ENCODE measurements at regions of chr7 and their contacts with region 1.

Region 1: DNA sequence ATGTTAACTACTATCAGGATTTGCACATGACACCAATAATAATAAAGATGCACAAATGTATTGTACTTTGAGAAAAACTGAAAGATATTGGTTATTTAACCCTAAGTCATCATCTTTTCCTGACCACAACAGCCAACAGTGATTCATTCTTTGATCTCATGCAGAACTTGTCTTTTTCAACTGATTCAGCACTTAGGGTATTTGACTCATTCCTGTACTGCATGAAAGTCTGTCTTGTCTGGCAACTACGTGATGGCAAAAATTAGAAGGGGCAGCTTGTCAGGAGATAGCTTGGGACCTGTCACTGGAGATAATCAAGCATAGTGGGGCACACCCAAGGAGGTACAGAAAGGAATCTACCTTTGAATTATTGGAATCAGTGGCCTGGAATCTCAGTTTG is 77.8 kb upstream of the LRRC17 start:
- DNase-seq: peak; percentile 49
- H3K4me3 Mint-ChIP-seq: no peak overlapping the region
- H3K27ac Mint-ChIP-seq: peak overlapping the region; percentile 52
- H3K4me1 Mint-ChIP-seq: peaks cover 7% of the 10 kb centered on the region
- H3K27me3 Mint-ChIP-seq: no peaks in the 10 kb centered on the region

Region 2: DNA sequence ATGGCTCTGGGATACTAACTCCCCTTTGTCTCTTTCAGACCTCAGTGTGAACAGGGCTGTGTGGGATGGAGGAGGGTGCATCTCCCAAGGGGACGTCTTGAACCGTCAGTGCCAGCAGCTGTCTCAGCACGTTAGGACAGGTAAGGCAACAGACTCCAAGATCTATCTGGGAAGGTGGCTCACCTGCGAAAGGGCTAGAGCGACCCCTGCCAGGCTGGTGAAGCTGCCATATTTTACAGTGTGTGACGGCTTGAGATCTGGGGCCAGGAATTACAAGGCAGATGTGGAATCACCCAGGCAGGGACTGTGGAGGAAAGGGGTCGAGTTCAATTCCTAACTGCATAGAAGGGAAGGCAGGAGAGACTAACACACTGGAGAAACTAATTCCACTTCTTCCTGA is 1803.9 kb before region 1 on chr7:
- CTCF ChIA-PET with region 1: no interaction called
- POLR2A ChIA-PET with region 1: no interaction called
- intact Hi-C with region 1: no loop called
- DNase-seq: no peak
- H3K4me3 Mint-ChIP-seq: no peak overlapping the region
- H3K27ac Mint-ChIP-seq: no peak overlapping the region
- H3K4me1 Mint-ChIP-seq: no peaks in the 10 kb centered on the region
- H3K27me3 Mint-ChIP-seq: peaks cover 8% of the 10 kb centered on the region

Region 3: GRCh38 chr7:102874166-102874829 is 39.3 kb after region 1 on chr7:
- CTCF ChIA-PET with region 1: no interaction called
- POLR2A ChIA-PET with region 1: no interaction called
- intact Hi-C with region 1: loop called (anchors 1 kb)
- DNase-seq: peak; percentile 51
- H3K4me3 Mint-ChIP-seq: no peak overlapping the region
- H3K27ac Mint-ChIP-seq: no peak overlapping the region
- H3K4me1 Mint-ChIP-seq: peaks cover 21% of the 10 kb centered on the region
- H3K27me3 Mint-ChIP-seq: no peaks in the 10 kb centered on the region

Region 4: GRCh38 chr7:102916426-102916825 is 81.4 kb after region 1 on chr7:
- CTCF ChIA-PET with region 1: no interaction called
- POLR2A ChIA-PET with region 1: no interaction called
- intact Hi-C with region 1: no loop called
- DNase-seq: no peak
- H3K4me3 Mint-ChIP-seq: no peak overlapping the region
- H3K27ac Mint-ChIP-seq: no peak overlapping the region
- H3K4me1 Mint-ChIP-seq: no peaks in the 10 kb centered on the region
- H3K27me3 Mint-ChIP-seq: no peaks in the 10 kb centered on the region

Region 5: DNA sequence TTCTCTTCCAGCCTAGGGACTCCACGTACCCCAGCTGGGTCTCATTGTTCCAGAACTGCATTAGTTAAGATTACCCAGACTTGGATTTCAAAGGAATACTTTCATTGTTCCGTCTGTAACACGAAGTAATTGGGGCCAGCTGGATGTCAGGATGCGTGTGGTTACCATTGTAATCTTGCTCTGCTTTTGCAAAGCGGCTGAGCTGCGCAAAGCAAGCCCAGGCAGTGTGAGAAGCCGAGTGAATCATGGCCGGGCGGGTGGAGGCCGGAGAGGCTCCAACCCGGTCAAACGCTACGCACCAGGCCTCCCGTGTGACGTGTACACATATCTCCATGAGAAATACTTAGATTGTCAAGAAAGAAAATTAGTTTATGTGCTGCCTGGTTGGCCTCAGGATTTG is 98.8 kb after region 1 on chr7:
- CTCF ChIA-PET with region 1: no interaction called
- POLR2A ChIA-PET with region 1: no interaction called
- intact Hi-C with region 1: no loop called
- DNase-seq: no peak
- H3K4me3 Mint-ChIP-seq: no peak overlapping the region
- H3K27ac Mint-ChIP-seq: no peak overlapping the region
- H3K4me1 Mint-ChIP-seq: no peaks in the 10 kb centered on the region
- H3K27me3 Mint-ChIP-seq: no peaks in the 10 kb centered on the region

Region 6: GRCh38 chr7:103413407-103413806 is 578.4 kb after region 1 on chr7:
- CTCF ChIA-PET with region 1: no interaction called
- POLR2A ChIA-PET with region 1: no interaction called
- intact Hi-C with region 1: no loop called
- DNase-seq: no peak
- H3K4me3 Mint-ChIP-seq: no peak overlapping the region
- H3K27ac Mint-ChIP-seq: no peak overlapping the region
- H3K4me1 Mint-ChIP-seq: no peaks in the 10 kb centered on the region
- H3K27me3 Mint-ChIP-seq: peaks cover 5% of the 10 kb centered on the region